ENCODE measurements at regions of chr2 and their contacts with region 1.

Region 1: GRCh38 chr2:68925295-68925896 is 27.3 kb downstream of the GKN2 start:
- DNase-seq: peak in 2 of 5 donors; percentile 16 to 42
- H3K4me3 ChIP-seq: no peak overlapping the region
- H3K27ac ChIP-seq: no peak overlapping the region
- H3K4me1 ChIP-seq: no peaks in the 10 kb centered on the region
- H3K27me3 ChIP-seq: no peaks in the 10 kb centered on the region
- CTCF ChIP-seq: peak; percentile 71 to 87 (median 80)
- EP300 ChIP-seq: no peak
- POLR2A ChIP-seq: no peak

Region 2: DNA sequence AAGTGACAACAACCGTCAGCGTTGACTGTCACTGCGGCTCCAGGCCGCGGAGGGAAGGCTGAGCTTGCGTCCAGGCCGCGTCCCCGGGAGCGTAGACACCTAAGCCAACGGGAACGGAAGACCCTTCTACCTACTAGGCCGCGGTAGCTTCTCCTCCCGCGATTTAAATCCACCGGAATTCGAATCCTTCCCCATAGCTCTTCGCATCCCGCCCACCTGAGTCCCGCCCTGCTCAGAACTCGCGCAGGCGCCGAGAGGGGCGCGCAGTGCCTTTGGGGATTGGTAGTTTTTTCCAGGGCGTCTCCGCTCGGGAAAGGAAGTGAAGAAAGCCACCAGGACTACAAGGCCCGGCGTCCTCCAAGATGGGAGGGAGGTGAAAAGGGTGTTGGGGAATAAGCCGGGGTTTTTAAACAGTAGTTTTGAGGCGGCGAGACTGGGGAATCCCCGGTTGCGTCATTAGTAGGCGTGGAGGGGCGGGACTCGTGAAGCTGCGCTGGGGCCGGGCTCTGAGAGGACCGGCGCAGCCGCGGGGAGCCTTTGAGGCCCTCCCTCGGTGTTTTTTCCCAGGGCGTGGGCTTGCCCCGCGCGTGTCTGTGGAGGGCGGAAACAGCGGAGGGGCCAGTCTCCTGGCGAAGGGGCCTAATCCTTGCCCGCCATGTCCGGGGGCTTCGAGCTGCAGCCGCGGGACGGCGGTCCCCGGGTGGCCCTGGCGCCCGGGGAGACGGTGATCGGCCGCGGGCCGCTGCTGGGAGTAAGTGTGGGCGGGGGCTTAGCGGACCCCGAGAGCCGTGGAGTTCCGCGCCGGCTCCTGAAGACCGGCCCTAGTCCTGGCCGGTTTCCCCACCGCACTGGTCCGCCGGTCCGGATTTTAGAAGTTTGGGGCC is 458.1 kb before region 1 on chr2 and contains the starts of genes APLF and FBXO48:
- intact Hi-C with region 1: loop called in 3 of 4 experiments (anchors 5 to 10 kb)
- DNase-seq: peak; percentile 95 to 98 (median 96)
- H3K4me3 ChIP-seq: peak within 1 kb of the TSS; percentile 90
- H3K27ac ChIP-seq: peak within 1 kb of the TSS; percentile 46 to 77
- H3K4me1 ChIP-seq: peaks cover 2% of the 10 kb centered on the region
- H3K27me3 ChIP-seq: no peaks in the 10 kb centered on the region
- CTCF ChIP-seq: no peak
- EP300 ChIP-seq: no peak
- POLR2A ChIP-seq: peak; percentile 56
- total RNA-seq, gene APLF: 8.2 to 14.1 (median 11.6) TPM
- total RNA-seq, gene FBXO48: 0.57 to 1.6 (median 1.1) TPM

Region 3: GRCh38 chr2:68709421-68709911 is 215.9 kb before region 1 on chr2:
- intact Hi-C with region 1: loop called in 3 of 4 experiments (anchors 5 to 10 kb)
- DNase-seq: peak in 2 of 5 donors; percentile 17 to 25
- H3K4me3 ChIP-seq: no peak overlapping the region
- H3K27ac ChIP-seq: no peak overlapping the region
- H3K4me1 ChIP-seq: no peaks in the 10 kb centered on the region
- H3K27me3 ChIP-seq: no peaks in the 10 kb centered on the region
- CTCF ChIP-seq: peak in 2 of 3 donors; percentile 34 to 52
- EP300 ChIP-seq: no peak
- POLR2A ChIP-seq: no peak

Region 4: GRCh38 chr2:68837164-68837860 is 88.1 kb before region 1 on chr2:
- intact Hi-C with region 1: no loop called
- DNase-seq: peak in 2 of 5 donors; percentile 34 to 45
- H3K4me3 ChIP-seq: no peak overlapping the region
- H3K27ac ChIP-seq: no peak overlapping the region
- H3K4me1 ChIP-seq: peaks cover 3% of the 10 kb centered on the region
- H3K27me3 ChIP-seq: no peaks in the 10 kb centered on the region
- CTCF ChIP-seq: peak in 1 of 3 donors; percentile 19
- EP300 ChIP-seq: no peak
- POLR2A ChIP-seq: no peak

Measured in ovary (tissue), 10 donors.